Activated T-helper 1 cell treated with anti-CD3 and anti-CD28 coated beads, Interleukin-12 subunit alpha, Interleukin-12 subunit beta, Interleukin-2, Interleukin-4 antibody, amounts not matched to agents 30 ng/mL and 10 ng/mL and 1 ng/mL, durations not matched to agents 14 hours and 24 hours and 36 hours (primary cell): ENCODE measurements at regions of chr2 and their contacts with region 1.

Region 1: DNA sequence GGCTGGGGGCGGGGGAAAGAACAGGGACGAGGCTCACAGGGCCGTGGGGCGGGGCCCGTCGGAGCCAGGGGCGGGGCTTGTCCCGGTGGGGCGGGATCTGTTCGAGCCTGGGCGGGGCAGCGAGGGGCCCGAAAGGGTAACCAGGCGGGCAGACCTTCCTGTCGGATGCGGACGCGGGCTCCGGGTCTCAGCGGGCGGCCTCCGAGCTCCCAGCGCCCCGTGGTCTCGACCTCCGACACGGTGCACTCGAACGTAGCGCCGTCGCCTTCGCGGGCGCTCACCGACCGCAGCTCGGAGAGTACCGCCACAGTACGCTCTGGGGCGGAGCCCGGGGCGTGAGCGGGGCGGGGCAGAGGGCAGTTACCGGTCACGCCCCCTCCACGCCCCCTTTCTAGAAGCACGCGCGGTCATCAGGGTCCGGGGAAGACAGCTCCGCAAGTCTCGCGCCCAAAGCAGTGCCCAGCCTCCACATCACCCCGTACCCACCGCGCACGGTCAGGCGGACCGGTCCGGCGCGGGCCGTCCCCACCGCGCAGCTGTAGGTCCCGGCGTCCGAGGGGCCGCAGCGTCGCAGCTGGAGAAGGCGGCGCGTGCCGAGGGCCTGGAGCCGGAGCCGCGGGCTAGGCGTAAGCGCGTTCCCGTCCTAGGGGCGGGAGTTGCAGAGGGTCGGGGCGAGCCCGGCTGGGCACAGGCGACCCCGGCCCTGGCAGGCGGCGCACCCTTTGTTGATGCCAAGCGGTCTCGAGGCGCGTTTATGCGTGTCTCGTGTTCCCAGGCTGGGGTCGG is 8.7 kb downstream of the TMEM198 start:
- DNase-seq: peak; percentile 80
- H3K4me3 Mint-ChIP-seq: peak overlapping the region; percentile 84
- H3K27ac Mint-ChIP-seq: no peak overlapping the region
- H3K4me1 Mint-ChIP-seq: no peaks in the 10 kb centered on the region
- H3K27me3 Mint-ChIP-seq: peaks cover 27% of the 10 kb centered on the region

Region 2: DNA sequence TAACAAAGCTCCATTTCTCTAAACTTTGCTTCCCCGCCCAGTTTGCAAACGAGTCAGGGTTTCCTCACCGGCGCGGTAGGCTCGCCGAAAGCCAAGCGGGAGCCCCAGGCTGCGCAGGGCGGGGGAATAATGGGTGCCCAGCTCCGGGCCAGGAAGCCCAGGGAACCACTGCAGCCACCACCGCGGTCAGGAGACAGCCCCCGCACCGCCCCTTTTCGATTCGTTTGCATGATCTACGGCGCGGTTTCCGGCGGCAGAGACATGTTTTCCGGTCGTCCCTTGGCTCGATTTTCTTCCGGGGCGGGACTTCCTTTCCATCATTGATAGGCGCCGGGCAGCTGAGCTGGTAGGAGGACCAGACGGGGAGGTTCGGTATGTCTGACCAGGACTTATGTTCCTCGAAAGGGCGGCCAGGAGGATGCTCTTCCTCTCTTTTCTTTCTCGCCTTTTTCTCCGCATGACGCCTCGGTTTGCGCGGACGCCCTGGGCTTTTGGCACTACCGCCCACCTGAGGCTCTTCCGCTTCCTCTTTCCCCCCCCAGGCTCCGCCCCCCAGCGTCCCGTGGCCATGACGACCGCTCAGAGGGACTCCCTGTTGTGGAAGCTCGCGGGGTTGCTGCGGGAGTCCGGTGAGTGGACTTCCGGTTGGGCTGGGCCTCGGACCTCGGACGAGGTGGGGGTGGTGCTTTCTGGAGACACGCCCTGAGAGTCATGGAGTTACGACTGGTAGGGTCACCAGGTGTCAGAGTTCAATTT is 45.2 kb after region 1 on chr2 and contains the start of gene STK11IP:
- intact Hi-C with region 1: loop called (anchors 1 kb)
- DNase-seq: peak; percentile 89
- H3K4me3 Mint-ChIP-seq: peak within 1 kb of the TSS; percentile 90
- H3K27ac Mint-ChIP-seq: peak within 1 kb of the TSS; percentile 96
- H3K4me1 Mint-ChIP-seq: peaks cover 26% of the 10 kb centered on the region
- H3K27me3 Mint-ChIP-seq: peaks cover 2% of the 10 kb centered on the region
- total RNA-seq, gene STK11IP: 38.0 and 38.9 TPM in 2 replicates